ENCODE measurements at regions of chr3 and their contacts with region 1.

Region 1: GRCh38 chr3:119559441-119559963 is at the start of gene CD80:
- DNase-seq: peak in 7 of 9 donors; percentile 14 to 63 (median 33)
- ATAC-seq: peak; percentile 76
- H3K4me3 ChIP-seq: no peak within 1 kb of the TSS
- H3K4me3 Mint-ChIP-seq: peak within 1 kb of the TSS in 2 of 10 donors; percentile 12 to 81
- H3K27ac ChIP-seq: no peak within 1 kb of the TSS
- H3K27ac Mint-ChIP-seq: peak within 1 kb of the TSS in 2 of 9 donors; percentile 68 to 71
- H3K4me1 ChIP-seq: peaks cover 0 to 6% of the 10 kb centered on the region in 2 donors
- H3K4me1 Mint-ChIP-seq: peaks cover 0 to 64% (median 8%) of the 10 kb centered on the region in 7 donors
- H3K27me3 ChIP-seq: no peaks in the 10 kb centered on the region
- H3K27me3 Mint-ChIP-seq: peaks cover 0 to 5% (median 0%) of the 10 kb centered on the region in 5 donors
- total RNA-seq, gene CD80: 0.13 to 15.1 (median 1.2) TPM in 3 of 5 experiments, not detected in the others

Region 2: GRCh38 chr3:119352849-119353502 is 206.5 kb before region 1 on chr3:
- CTCF ChIA-PET with region 1: no interaction called
- POLR2A ChIA-PET with region 1: no interaction called
- intact Hi-C with region 1: no loop called
- DNase-seq: peak in 7 of 9 donors; percentile 53 to 78 (median 69)
- ATAC-seq: peak; percentile 77
- H3K4me3 ChIP-seq: no peak overlapping the region
- H3K4me3 Mint-ChIP-seq: peak overlapping the region in 8 of 10 donors; percentile 2 to 67 (median 54)
- H3K27ac ChIP-seq: no peak overlapping the region
- H3K27ac Mint-ChIP-seq: peak overlapping the region in 8 of 9 donors; percentile 13 to 81 (median 42)
- H3K4me1 ChIP-seq: peaks cover 0 to 35% of the 10 kb centered on the region in 2 donors
- H3K4me1 Mint-ChIP-seq: peaks cover 26 to 47% (median 36%) of the 10 kb centered on the region in 7 donors
- H3K27me3 ChIP-seq: no peaks in the 10 kb centered on the region
- H3K27me3 Mint-ChIP-seq: peaks cover 0 to 20% (median 0%) of the 10 kb centered on the region in 5 donors

Region 3: GRCh38 chr3:119380697-119381096 is 178.8 kb before region 1 on chr3:
- CTCF ChIA-PET with region 1: no interaction called
- POLR2A ChIA-PET with region 1: no interaction called
- intact Hi-C with region 1: loop called in 1 of 2 experiments (anchors 5 kb)
- DNase-seq: no peak
- ATAC-seq: no peak
- H3K4me3 ChIP-seq: no peak overlapping the region
- H3K4me3 Mint-ChIP-seq: no peak overlapping the region
- H3K27ac ChIP-seq: no peak overlapping the region
- H3K27ac Mint-ChIP-seq: no peak overlapping the region
- H3K4me1 ChIP-seq: no peaks in the 10 kb centered on the region
- H3K4me1 Mint-ChIP-seq: peaks cover 0 to 3% (median 0%) of the 10 kb centered on the region in 7 donors
- H3K27me3 ChIP-seq: no peaks in the 10 kb centered on the region
- H3K27me3 Mint-ChIP-seq: no peaks in the 10 kb centered on the region